ENCODE measurements at regions of chr3 and their contacts with region 1.

Region 1: GRCh38 chr3:71542521-71543370 is 40.8 kb downstream of the FOXP1 start:
- H3K4me3 ChIP-seq: no peak overlapping the region
- H3K27ac ChIP-seq: peak overlapping the region; percentile 54
- H3K4me1 ChIP-seq: peaks cover 13% of the 10 kb centered on the region
- CTCF ChIP-seq: no peak

Region 2: DNA sequence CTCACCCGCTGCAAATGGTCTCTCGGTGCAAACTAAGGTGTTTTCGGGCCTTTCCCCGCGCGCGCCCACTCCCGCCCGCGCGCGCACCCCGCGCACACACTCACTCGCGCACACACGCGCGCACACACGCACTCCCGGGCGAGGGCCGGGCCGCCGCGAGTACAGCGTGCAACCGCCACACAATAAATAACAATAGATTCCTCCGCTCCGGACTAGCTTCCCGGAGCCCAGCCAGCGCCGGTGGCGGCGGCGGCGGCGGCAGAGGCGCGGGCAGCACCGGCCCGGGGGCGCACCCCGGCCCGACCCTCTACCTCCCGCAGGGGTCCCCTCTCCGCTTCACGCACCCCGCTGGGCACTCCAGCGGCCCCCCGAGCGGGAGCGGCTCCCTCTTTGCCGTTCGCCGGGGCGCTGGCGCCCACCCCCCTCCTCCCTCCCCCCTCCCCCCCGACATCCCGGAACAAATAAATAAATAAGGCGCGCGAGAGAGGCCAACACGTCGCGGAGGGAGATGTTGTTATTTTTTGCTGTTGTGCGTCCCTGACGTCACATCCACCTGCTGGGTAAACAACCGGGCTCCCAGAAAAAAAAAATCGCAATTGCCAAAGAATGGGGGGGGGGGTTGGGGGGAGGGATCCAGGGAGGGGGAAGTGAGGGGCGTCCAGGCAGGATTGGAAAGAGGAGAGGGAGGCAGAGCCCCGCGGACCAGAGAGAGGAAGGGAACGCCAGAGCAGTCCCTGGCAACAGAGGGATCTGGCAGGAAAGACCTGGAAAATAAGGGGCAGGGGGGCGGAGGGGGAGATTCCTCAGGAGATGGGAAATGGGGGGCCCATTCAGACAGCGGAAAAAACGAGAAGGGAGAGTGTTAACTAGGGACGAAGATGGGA is 41.1 kb after region 1 on chr3 and contains the start of gene FOXP1:
- CTCF ChIA-PET with region 1: no interaction called
- POLR2A ChIA-PET with region 1: interaction called, 10 read pairs
- H3K4me3 ChIP-seq: peak within 1 kb of the TSS; percentile 90
- H3K27ac ChIP-seq: peak within 1 kb of the TSS; percentile 98
- H3K4me1 ChIP-seq: peaks cover 14% of the 10 kb centered on the region
- CTCF ChIP-seq: no peak